ENCODE measurements at regions of chr4 and their contacts with region 1.

Region 1: DNA sequence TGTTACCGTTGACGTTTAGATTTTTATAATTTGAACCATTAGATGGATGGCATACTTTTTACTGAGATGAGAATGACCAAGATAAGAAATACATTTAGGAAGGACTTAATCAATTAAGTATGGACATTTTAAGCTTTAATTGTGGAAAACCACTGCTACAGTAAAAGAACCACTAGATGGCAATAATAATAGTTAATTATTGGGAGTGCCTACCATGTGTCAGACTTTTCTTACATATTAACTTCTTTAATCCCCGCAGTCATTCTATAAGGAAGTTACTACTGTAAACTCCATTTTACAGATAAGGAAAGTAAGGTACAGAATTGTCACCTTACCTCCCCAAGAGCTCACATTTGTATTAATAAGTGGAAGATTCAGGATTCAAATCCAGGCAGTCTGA is 48.5 kb upstream of the MYOZ2 start:
- DNase-seq: no peak
- ATAC-seq: no peak
- H3K4me3 ChIP-seq: no peak overlapping the region
- H3K4me3 Mint-ChIP-seq: no peak overlapping the region
- H3K27ac ChIP-seq: no peak overlapping the region
- H3K27ac Mint-ChIP-seq: no peak overlapping the region
- H3K4me1 ChIP-seq: no peaks in the 10 kb centered on the region
- H3K4me1 Mint-ChIP-seq: peaks cover 0 to 8% (median 0%) of the 10 kb centered on the region in 7 donors
- H3K27me3 ChIP-seq: no peaks in the 10 kb centered on the region
- H3K27me3 Mint-ChIP-seq: peaks cover 0 to 19% (median 0%) of the 10 kb centered on the region in 5 donors

Region 2: DNA sequence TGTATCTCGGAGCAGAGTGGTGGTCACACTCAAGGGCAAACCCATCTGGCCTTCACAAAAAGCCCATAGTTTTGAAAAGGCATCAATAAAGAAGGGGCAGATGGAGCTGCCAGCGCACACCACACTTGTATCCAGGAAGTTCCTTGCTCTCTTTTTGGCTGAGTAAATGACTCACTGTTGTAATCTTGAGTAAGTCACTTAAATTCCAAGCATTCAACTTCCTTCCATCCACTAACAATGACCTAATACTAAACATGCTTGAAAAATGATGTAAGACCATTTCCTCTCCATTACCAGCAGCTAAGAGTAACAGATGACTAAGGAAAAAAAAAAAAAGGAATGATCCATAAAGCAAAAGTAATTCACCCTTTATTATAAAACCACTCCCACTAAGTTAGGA is 16.1 kb after region 1 on chr4:
- CTCF ChIA-PET with region 1: no interaction called
- POLR2A ChIA-PET with region 1: interaction called, 14 read pairs
- intact Hi-C with region 1: no loop called
- DNase-seq: no peak
- ATAC-seq: peak; percentile 78
- H3K4me3 ChIP-seq: no peak overlapping the region
- H3K4me3 Mint-ChIP-seq: no peak overlapping the region
- H3K27ac ChIP-seq: no peak overlapping the region
- H3K27ac Mint-ChIP-seq: no peak overlapping the region
- H3K4me1 ChIP-seq: peaks cover 0 to 4% of the 10 kb centered on the region in 2 donors
- H3K4me1 Mint-ChIP-seq: peaks cover 0 to 20% (median 6%) of the 10 kb centered on the region in 7 donors
- H3K27me3 ChIP-seq: no peaks in the 10 kb centered on the region
- H3K27me3 Mint-ChIP-seq: peaks cover 0 to 4% (median 4%) of the 10 kb centered on the region in 5 donors